ENCODE measurements at regions of chr6 and their contacts with region 1.

Region 1: DNA sequence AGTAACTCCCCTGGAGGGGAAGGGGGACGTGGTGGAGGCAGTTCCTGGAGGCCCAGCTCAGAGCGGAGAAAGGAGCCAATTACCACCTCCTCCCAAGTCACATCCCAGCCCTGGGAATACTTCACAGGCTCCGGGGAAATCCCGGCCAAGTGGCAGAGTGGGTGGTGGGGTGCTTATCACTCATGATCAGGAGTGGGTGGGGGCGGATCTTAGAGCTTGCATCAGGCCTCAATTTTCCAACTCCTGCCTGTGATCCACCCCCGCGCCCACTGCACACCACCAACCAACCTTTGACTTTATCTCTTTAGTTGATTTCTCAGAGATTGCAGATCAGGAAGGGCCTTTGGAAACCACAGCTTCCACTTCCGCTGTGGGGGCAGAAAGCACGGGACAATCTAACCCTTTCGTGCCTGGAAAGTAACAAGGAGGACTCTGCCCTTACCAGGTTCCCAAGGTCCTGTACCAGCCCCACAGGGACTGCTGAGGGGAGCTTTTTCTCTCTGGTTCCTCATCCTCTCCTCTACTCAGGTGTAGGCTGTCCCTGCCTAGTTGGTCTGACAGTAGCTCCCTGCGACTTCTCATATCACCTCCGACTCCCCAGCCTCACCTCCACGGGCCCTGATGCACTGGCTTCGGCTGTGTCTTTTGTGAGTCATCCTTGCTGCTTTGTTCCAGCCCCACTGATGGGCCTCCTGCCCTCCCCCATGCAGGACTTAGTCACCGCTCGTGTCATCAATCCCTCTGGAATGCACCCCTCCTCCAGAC is 24.9 kb upstream of the IER3 start:
- DNase-seq: peak; percentile 68
- H3K4me3 Mint-ChIP-seq: peak overlapping the region; percentile 66
- H3K27ac Mint-ChIP-seq: peak overlapping the region; percentile 98
- H3K4me1 Mint-ChIP-seq: peaks cover 68% of the 10 kb centered on the region
- H3K27me3 Mint-ChIP-seq: no peaks in the 10 kb centered on the region

Region 2: GRCh38 chr6:30787954-30788353 is 18.7 kb after region 1 on chr6:
- intact Hi-C with region 1: loop called (anchors 1 kb)
- DNase-seq: peak; percentile 31
- H3K4me3 Mint-ChIP-seq: peak overlapping the region; percentile 66
- H3K27ac Mint-ChIP-seq: peak overlapping the region; percentile 96
- H3K4me1 Mint-ChIP-seq: peaks cover 57% of the 10 kb centered on the region
- H3K27me3 Mint-ChIP-seq: no peaks in the 10 kb centered on the region

Region 3: GRCh38 chr6:30926644-30927043 is 157.4 kb after region 1 on chr6:
- intact Hi-C with region 1: no loop called
- DNase-seq: no peak
- H3K4me3 Mint-ChIP-seq: no peak overlapping the region
- H3K27ac Mint-ChIP-seq: no peak overlapping the region
- H3K4me1 Mint-ChIP-seq: no peaks in the 10 kb centered on the region
- H3K27me3 Mint-ChIP-seq: no peaks in the 10 kb centered on the region